ENCODE measurements at regions of chr2 and their contacts with region 1.

Region 1: GRCh38 chr2:207166039-207166348 is 246 bp upstream of the KLF7 start:
- DNase-seq: peak; percentile 95
- ATAC-seq: peak; percentile 93
- H3K4me3 ChIP-seq: 0 out of 2 replicates have a peak overlapping the region, but pooled peaks have one; percentile 71
- H3K27ac ChIP-seq: peak overlapping the region; percentile 97
- H3K4me1 ChIP-seq: peaks cover 4% of the 10 kb centered on the region; the same call in 1 of the 2 replicates
- H3K27me3 ChIP-seq: no peaks in the 10 kb centered on the region
- CTCF ChIP-seq: no peak
- EP300 ChIP-seq: no peak
- POLR2A ChIP-seq: no peak
- RAD21 ChIP-seq: no peak

Region 2: GRCh38 chr2:206800506-206801417 is 365.2 kb before region 1 on chr2:
- CTCF ChIA-PET with region 1: no interaction called
- POLR2A ChIA-PET with region 1: no interaction called
- RAD21 ChIA-PET with region 1: no interaction called
- SMC1A ChIA-PET with region 1: interaction called, 4 read pairs
- in situ Hi-C with region 1: no loop called
- intact Hi-C with region 1: loop called (anchors 10 kb)
- DNase-seq: no peak
- ATAC-seq: peak; percentile 85
- H3K4me3 ChIP-seq: no peak overlapping the region
- H3K27ac ChIP-seq: no peak overlapping the region
- H3K4me1 ChIP-seq: peaks cover 3% of the 10 kb centered on the region
- H3K27me3 ChIP-seq: no peaks in the 10 kb centered on the region
- CTCF ChIP-seq: peak; percentile 55 to 80 (median 71); a peak in 5 of 6 replicates
- EP300 ChIP-seq: no peak
- POLR2A ChIP-seq: no peak
- RAD21 ChIP-seq: peak; percentile 90

Region 3: DNA sequence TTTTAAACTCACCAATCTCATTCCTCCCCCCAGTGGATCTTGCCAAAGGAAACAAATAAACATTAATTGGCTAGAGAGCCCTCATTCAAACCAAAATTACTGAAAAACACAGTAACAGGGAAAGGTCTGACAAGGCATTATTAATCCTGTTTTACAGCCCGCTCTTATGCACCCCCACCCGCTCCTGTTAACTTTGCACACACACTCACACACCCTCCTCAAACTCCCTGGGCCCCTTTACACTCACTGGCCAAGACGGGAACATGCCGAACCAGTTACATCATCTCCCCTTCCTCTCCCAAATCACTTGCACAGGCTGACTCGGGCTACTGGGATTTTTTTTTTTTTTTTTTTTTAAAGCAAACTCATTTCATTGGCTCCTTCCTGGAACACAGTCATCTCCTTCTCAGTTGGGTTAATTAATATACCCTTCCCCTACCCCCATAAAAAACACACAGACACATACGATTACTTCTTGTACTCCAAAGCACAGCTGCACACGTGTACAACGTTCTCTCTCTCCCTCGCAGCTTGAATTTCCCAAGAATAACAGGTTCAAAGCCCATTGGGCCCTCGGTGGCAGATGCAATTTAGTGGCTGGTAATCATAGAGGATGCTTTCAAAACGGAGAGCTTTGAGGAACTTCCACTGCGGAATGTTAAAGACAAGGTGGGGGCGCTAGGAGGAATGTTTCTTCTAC is 32.0 kb before region 1 on chr2:
- CTCF ChIA-PET with region 1: no interaction called
- POLR2A ChIA-PET with region 1: interaction called, 56 read pairs
- RAD21 ChIA-PET with region 1: interaction called, 3 read pairs
- SMC1A ChIA-PET with region 1: interaction called, 10 read pairs
- in situ Hi-C with region 1: no loop called
- intact Hi-C with region 1: no loop called
- DNase-seq: no peak
- ATAC-seq: no peak
- H3K4me3 ChIP-seq: no peak overlapping the region
- H3K27ac ChIP-seq: no peak overlapping the region
- H3K4me1 ChIP-seq: peaks cover 2% of the 10 kb centered on the region; the same call in 1 of the 2 replicates
- H3K27me3 ChIP-seq: no peaks in the 10 kb centered on the region
- CTCF ChIP-seq: no peak
- EP300 ChIP-seq: no peak
- POLR2A ChIP-seq: no peak
- RAD21 ChIP-seq: no peak

Region 4: GRCh38 chr2:207149249-207150213 is 16.5 kb before region 1 on chr2:
- CTCF ChIA-PET with region 1: interaction called, 5 read pairs
- POLR2A ChIA-PET with region 1: interaction called, 56 read pairs
- RAD21 ChIA-PET with region 1: interaction called, 58 read pairs
- SMC1A ChIA-PET with region 1: interaction called, 52 read pairs
- in situ Hi-C with region 1: no loop called
- intact Hi-C with region 1: no loop called
- DNase-seq: no peak
- ATAC-seq: peak; percentile 88
- H3K4me3 ChIP-seq: no peak overlapping the region; the same call in none of the 2 replicates
- H3K27ac ChIP-seq: no peak overlapping the region
- H3K4me1 ChIP-seq: peaks cover 22% of the 10 kb centered on the region
- H3K27me3 ChIP-seq: no peaks in the 10 kb centered on the region
- CTCF ChIP-seq: no peak
- EP300 ChIP-seq: peak; percentile 60 to 75; a peak in 2 of 4 replicates
- POLR2A ChIP-seq: no peak
- RAD21 ChIP-seq: no peak

Region 5: GRCh38 chr2:207214446-207214845 is 48.5 kb after region 1 on chr2:
- CTCF ChIA-PET with region 1: no interaction called
- POLR2A ChIA-PET with region 1: no interaction called
- RAD21 ChIA-PET with region 1: no interaction called
- SMC1A ChIA-PET with region 1: no interaction called
- in situ Hi-C with region 1: no loop called
- intact Hi-C with region 1: no loop called
- DNase-seq: no peak
- ATAC-seq: no peak
- H3K4me3 ChIP-seq: no peak overlapping the region
- H3K27ac ChIP-seq: no peak overlapping the region
- H3K4me1 ChIP-seq: no peaks in the 10 kb centered on the region
- H3K27me3 ChIP-seq: no peaks in the 10 kb centered on the region
- CTCF ChIP-seq: no peak
- EP300 ChIP-seq: no peak
- POLR2A ChIP-seq: no peak
- RAD21 ChIP-seq: no peak

Region 6: GRCh38 chr2:207283356-207283755 is 117.4 kb after region 1 on chr2:
- CTCF ChIA-PET with region 1: interaction called, 4 read pairs
- POLR2A ChIA-PET with region 1: interaction called, 4 read pairs
- RAD21 ChIA-PET with region 1: interaction called, 11 read pairs
- SMC1A ChIA-PET with region 1: interaction called, 4 read pairs
- in situ Hi-C with region 1: no loop called
- intact Hi-C with region 1: loop called (anchors 5 kb)
- DNase-seq: no peak
- ATAC-seq: peak; percentile 57
- H3K4me3 ChIP-seq: no peak overlapping the region
- H3K27ac ChIP-seq: peak overlapping the region; percentile 36; the same call in 1 of the 2 replicates
- H3K4me1 ChIP-seq: peaks cover 27% of the 10 kb centered on the region
- H3K27me3 ChIP-seq: no peaks in the 10 kb centered on the region
- CTCF ChIP-seq: peak in 1 of 3 experiments; percentile 2; a peak in 1 of 6 replicates
- EP300 ChIP-seq: no peak
- POLR2A ChIP-seq: no peak
- RAD21 ChIP-seq: 0 out of 2 replicates have a peak, but pooled peaks have one; percentile 25

Region 7: DNA sequence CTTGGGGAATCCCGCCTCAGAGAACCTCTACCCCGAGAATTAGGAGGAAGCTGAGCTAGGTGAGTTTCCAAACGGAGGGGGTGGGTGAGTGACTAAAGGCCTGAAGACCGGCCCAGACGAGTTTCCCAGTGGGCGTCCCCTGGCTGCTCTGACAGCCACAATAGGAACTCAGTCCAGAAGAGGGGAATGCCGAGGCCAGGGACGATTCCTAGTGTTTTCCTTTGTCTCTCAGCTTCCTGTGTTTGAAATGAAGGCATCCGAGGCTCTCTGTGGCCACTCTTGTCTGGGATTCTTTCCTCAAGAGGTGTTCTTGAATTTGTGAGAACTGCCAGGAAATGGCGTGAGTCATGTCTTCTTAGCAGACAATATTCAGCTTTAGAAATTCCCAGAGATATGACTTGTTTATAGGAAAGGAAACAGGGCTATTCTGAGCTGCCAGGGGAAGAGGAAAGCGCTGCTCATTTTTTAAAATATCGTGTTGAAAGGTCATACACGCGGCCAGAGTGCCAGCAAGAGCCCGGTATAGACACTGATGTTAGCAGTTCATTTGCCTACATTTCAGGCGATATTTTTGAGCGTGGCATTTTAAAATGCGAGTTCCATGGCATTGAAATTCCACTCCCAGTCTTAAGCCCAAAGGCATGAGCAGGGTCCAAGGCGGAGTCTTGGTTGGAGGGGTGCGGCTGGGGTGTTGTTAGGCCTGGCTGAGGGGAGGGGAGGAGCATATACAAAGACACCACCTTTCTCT is 168.8 kb after region 1 on chr2:
- CTCF ChIA-PET with region 1: interaction called, 6 read pairs
- POLR2A ChIA-PET with region 1: interaction called, 22 read pairs
- RAD21 ChIA-PET with region 1: interaction called, 31 read pairs
- SMC1A ChIA-PET with region 1: interaction called, 4 read pairs
- in situ Hi-C with region 1: no loop called
- intact Hi-C with region 1: loop called (anchors 2 kb)
- DNase-seq: no peak
- ATAC-seq: peak; percentile 43
- H3K4me3 ChIP-seq: peak overlapping the region; percentile 46
- H3K27ac ChIP-seq: peak overlapping the region; percentile 98
- H3K4me1 ChIP-seq: peaks cover 59% of the 10 kb centered on the region
- H3K27me3 ChIP-seq: no peaks in the 10 kb centered on the region
- CTCF ChIP-seq: no peak
- EP300 ChIP-seq: no peak
- POLR2A ChIP-seq: no peak
- RAD21 ChIP-seq: no peak